Ascending aorta (tissue), 2 donors: ENCODE measurements at regions of chr15 and their contacts with region 1.

Region 1: GRCh38 chr15:99536422-99537040 is 29.3 kb upstream of the MEF2A start:
- DNase-seq: peak; percentile 65 to 94
- H3K4me3 ChIP-seq: no peak overlapping the region
- H3K27ac ChIP-seq: peak overlapping the region; percentile 81 to 84
- H3K4me1 ChIP-seq: peaks cover 5 to 14% of the 10 kb centered on the region in 2 donors
- H3K27me3 ChIP-seq: no peaks in the 10 kb centered on the region
- CTCF ChIP-seq: no peak

Region 2: DNA sequence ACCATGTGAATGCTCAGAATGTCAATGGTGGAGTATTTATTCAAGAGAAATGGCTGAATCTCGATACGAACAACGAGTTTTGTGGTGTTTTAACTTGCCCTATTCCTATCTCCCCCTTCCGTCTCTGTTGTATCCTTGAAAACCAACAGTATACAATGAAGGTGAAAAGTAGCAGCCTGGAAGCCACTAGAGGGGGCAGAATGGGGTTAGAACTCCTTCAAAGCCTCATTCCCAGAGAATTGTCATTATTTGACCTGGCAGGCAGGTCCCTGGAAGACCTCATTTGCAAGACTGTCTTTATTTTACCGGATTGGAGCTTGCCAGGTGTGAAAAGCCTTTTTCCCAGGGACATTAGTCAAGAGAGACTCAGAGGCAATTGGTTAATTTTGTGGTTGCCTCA is 145.9 kb before region 1 on chr15:
- intact Hi-C with region 1: no loop called
- DNase-seq: no peak
- H3K4me3 ChIP-seq: no peak overlapping the region
- H3K27ac ChIP-seq: no peak overlapping the region
- H3K4me1 ChIP-seq: no peaks in the 10 kb centered on the region
- H3K27me3 ChIP-seq: no peaks in the 10 kb centered on the region
- CTCF ChIP-seq: no peak

Region 3: GRCh38 chr15:99442252-99442897 is 94.2 kb before region 1 on chr15:
- intact Hi-C with region 1: loop called (anchors 1 kb)
- DNase-seq: peak in 1 of 2 donors; percentile 91
- H3K4me3 ChIP-seq: peak overlapping the region in 1 of 2 donors; percentile 37
- H3K27ac ChIP-seq: peak overlapping the region; percentile 85 to 93
- H3K4me1 ChIP-seq: peaks cover 16 to 37% of the 10 kb centered on the region in 2 donors
- H3K27me3 ChIP-seq: no peaks in the 10 kb centered on the region
- CTCF ChIP-seq: no peak

Region 4: GRCh38 chr15:99452774-99453636 is 83.5 kb before region 1 on chr15:
- intact Hi-C with region 1: loop called (anchors 1 kb)
- DNase-seq: peak; percentile 87 to 96
- H3K4me3 ChIP-seq: peak overlapping the region in 1 of 2 donors; percentile 50
- H3K27ac ChIP-seq: peak overlapping the region; percentile 95 to 96
- H3K4me1 ChIP-seq: peaks cover 21 to 36% of the 10 kb centered on the region in 2 donors
- H3K27me3 ChIP-seq: no peaks in the 10 kb centered on the region
- CTCF ChIP-seq: no peak

Region 5: GRCh38 chr15:99476413-99477222 is 59.9 kb before region 1 on chr15:
- intact Hi-C with region 1: loop called (anchors 1 kb)
- DNase-seq: peak; percentile 64 to 94
- H3K4me3 ChIP-seq: no peak overlapping the region
- H3K27ac ChIP-seq: peak overlapping the region; percentile 86 to 88
- H3K4me1 ChIP-seq: peaks cover 16 to 22% of the 10 kb centered on the region in 2 donors
- H3K27me3 ChIP-seq: no peaks in the 10 kb centered on the region
- CTCF ChIP-seq: no peak

Region 6: GRCh38 chr15:99507504-99508310 is 28.8 kb before region 1 on chr15:
- intact Hi-C with region 1: loop called (anchors 2 kb)
- DNase-seq: peak in 1 of 2 donors; percentile 87
- H3K4me3 ChIP-seq: peak overlapping the region; percentile 22 to 50
- H3K27ac ChIP-seq: peak overlapping the region; percentile 82 to 84
- H3K4me1 ChIP-seq: peaks cover 5 to 32% of the 10 kb centered on the region in 2 donors
- H3K27me3 ChIP-seq: no peaks in the 10 kb centered on the region
- CTCF ChIP-seq: no peak